ENCODE measurements at regions of chr2 and their contacts with region 1.

Region 1: DNA sequence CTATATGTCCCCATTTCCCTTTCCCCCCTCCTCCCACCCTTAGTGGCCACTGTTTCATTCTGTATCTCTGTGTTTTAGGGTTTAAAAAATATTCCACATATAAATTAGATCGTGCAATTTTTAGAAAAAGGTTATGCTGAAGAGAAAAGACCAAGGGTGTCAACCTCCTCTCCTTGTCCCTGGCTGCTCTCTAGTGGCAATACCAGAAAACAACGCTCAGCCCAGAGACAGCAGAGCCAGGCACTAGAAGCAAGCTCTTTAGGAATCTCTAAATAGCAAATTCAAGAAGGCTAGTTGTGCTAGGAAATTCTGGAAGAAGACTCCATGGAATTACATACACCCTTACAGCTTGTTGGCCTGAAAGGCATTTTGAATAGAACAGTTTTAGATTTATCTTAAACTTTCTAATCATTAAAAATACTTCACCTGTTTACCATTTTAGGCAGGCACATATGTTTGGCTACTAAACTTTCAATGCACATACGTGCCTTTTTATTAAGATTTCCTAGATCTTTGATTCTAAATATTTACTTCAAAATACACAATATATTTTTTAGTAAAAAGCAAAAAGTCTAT is 35.1 kb upstream of the RASGRP3 start:
- DNase-seq: no peak

Region 2: DNA sequence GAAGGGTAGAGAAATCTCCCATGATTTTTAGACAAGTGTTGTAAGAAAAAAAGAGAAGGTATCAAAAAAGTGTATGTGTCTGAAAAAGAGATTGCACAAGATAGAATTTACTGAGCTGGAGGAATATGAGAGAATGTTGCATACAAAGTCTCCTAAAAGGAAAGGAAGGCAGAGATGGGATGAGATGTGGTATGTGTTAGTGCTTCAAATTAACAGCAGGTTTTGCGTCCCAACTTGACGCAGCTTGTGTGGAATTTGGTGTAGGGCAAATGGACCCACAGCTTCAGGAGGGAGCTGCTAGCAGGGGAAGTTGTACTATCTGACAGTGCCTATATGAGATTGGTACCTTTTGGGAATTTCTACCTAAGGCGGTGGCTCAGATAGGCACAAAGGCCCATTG is 26.1 kb after region 1 on chr2:
- intact Hi-C with region 1: loop called in 1 of 2 experiments (anchors 1 kb)
- DNase-seq: no peak

Region 3: DNA sequence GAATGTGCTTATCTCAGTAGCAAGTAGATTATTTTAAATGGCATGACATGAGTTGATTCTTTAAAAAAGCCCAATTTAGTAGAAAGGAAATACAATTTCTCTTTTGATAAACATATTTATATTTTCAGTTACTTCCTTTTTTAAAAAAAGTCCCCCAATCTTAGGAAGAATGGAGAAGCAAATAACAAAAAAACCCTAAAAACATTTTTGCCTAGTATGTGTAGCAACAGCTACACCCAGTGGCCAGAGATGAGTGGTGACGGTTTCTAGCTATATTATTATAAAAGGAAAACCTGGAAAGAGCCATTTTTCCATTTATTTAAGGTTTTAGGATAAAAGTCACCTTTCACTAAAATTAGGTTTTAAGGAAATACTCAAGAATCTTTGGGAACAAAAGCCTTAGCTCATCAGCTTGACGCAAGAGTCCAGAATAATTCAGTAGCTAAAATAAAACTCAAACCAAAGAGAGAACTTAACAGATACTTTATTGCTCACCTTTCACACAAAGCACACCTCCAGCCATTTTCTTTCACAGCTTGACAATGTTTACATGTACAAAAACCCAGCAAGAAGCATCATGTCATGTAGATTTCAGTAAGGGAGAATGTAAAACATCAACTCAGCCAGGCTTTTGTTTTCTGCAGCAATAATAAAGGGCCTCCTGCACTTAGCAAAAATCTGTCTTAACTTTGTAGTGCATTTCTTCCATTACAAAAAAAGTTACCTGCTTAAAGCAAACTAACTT is 142.0 kb after region 1 on chr2:
- intact Hi-C with region 1: no loop called
- DNase-seq: no peak

Measured in posterior vena cava (tissue), 2 donors.